Activated CD4-positive, alpha-beta memory T cell treated with anti-CD3 and anti-CD28 coated beads for 36 hours (primary cell): ENCODE measurements at regions of chr16 and their contacts with region 1.

Region 1: DNA sequence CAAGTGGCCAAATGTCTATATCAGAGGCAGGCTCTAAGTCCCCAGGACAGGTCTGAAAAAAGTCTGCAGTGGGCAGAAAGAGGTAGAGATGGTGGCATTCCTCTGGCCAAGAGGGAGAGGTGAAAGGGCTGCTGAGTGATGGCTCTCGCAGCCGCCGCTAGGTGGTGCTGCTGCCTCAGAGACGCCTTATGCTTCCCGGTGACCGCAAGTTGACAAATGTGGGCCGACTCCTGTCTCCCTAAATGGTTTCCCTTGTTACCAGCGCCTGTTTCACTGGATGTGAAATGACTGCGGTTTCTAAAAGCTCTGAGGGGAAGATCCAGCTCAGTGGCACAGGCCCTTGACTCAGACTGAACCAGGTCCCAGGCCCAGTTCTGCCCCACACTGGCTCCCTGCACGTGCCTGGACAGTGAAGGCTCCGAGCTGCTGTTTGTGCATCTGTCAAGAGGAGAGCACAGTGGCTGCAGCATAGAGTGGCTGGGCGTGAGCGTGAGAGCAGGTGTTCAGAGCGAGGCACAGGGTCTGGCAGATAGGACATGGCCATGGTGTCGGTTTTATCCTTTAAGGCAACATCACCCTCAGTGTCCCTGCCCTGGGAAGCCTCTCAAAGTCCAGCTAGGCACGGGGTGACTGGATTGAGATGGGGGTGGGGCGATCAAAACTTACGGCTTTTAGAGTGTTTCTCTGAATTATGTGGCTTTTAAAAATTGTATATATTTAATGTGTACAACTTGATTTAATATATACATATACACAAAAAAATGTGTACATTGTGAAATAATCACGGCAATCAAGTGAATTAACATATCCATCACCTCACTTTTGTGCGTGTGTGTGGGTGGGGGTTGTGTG is 19.9 kb downstream of the CLEC16A start:
- DNase-seq: peak; percentile 93
- H3K4me3 Mint-ChIP-seq: peak overlapping the region; percentile 60
- H3K27ac Mint-ChIP-seq: peak overlapping the region; percentile 98
- H3K4me1 Mint-ChIP-seq: peaks cover 77% of the 10 kb centered on the region
- H3K27me3 Mint-ChIP-seq: no peaks in the 10 kb centered on the region

Region 2: DNA sequence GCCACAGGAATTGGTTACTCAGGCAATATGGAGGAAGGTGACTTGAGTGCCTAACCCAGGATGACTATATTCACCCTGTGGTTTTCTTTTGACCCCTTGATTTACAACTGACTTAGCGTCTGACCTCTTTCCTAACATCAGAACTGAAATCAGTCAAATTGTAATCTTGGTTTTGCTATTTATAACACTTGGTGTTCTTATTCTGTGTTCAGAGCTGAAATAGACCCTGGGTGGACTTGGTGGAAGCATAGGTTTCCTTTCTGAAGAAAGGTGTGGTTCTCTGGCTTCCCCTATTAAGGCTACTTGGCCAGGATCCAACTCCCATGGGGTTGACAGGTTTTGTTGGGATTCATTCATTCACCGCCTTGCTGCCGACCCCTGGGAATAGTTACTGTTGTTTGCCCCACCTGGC is 60.9 kb after region 1 on chr16:
- CTCF ChIA-PET with region 1: interaction called, 5 read pairs
- POLR2A ChIA-PET with region 1: interaction called, 7 read pairs
- intact Hi-C with region 1: loop called (anchors 2 kb)
- DNase-seq: peak; percentile 24
- H3K4me3 Mint-ChIP-seq: no peak overlapping the region
- H3K27ac Mint-ChIP-seq: peak overlapping the region; percentile 91
- H3K4me1 Mint-ChIP-seq: peaks cover 22% of the 10 kb centered on the region
- H3K27me3 Mint-ChIP-seq: no peaks in the 10 kb centered on the region

Region 3: DNA sequence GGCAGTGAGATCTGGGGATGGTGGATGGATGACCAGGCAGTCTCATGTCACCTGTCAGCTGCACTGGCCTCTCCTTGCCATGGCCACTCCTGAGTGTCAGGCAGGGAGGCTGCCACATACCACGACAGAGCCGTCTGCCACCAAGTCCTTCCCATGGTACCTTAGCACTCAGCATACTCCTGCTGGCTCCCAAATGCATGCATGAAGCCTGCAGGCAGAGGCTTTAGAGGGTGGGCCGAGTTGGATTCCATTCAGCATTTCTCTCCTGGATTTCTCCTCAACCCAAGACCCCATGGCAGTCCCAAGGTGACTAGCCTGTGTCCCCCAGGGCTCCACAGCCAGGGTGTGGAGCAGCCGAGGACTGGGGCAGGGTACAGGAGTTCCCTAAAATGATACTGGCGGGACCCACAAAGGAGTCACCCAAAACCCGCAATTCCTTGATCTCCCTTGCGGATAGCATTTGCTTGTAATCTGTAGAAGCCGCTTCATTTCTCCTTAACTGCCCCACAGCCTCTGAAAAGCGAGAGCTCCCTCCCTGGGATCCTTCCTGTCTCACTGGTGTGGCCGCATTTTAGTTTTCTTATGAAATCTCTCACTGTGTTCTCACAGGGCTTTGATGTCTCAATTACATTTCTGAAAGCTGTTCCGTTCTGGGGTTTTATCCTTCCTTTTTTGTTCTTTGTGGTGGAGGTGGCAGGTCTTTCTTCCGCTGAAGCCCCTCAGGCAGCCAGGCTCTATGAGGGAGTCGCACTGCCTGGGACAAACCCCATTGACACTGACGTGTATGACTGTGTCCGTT is 150.3 kb after region 1 on chr16:
- CTCF ChIA-PET with region 1: interaction called, 14 read pairs
- POLR2A ChIA-PET with region 1: interaction called, 18 read pairs
- intact Hi-C with region 1: no loop called
- DNase-seq: peak; percentile 71
- H3K4me3 Mint-ChIP-seq: peak overlapping the region; percentile 60
- H3K27ac Mint-ChIP-seq: peak overlapping the region; percentile 88
- H3K4me1 Mint-ChIP-seq: peaks cover 73% of the 10 kb centered on the region
- H3K27me3 Mint-ChIP-seq: no peaks in the 10 kb centered on the region

Region 4: DNA sequence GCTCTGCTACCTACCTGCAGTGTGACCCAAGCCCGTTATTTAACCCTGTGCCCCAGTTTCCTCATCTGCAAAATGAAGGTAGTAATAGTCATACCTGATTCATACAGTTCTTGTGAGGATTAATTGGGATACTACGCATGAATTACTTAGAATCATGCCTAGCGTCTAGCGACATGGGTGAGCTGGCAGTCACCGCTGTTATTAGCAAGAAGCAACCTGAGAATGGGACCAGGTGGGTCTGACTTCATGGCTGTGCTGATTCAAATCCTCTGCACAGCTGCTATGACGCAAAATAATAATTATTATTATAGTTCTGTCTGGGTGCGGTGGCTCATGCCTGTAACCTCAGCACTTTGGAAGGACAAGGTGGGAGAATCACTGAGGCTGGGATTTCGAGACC is 283.9 kb after region 1 on chr16:
- CTCF ChIA-PET with region 1: interaction called, 118 read pairs
- POLR2A ChIA-PET with region 1: interaction called, 93 read pairs
- intact Hi-C with region 1: loop called (anchors 1 kb)
- DNase-seq: peak; percentile 65
- H3K4me3 Mint-ChIP-seq: no peak overlapping the region
- H3K27ac Mint-ChIP-seq: peak overlapping the region; percentile 93
- H3K4me1 Mint-ChIP-seq: peaks cover 64% of the 10 kb centered on the region
- H3K27me3 Mint-ChIP-seq: peaks cover 2% of the 10 kb centered on the region

Region 5: GRCh38 chr16:11370084-11370931 is 406.0 kb after region 1 on chr16:
- CTCF ChIA-PET with region 1: interaction called, 11 read pairs
- POLR2A ChIA-PET with region 1: no interaction called
- intact Hi-C with region 1: no loop called
- DNase-seq: peak; percentile 38
- H3K4me3 Mint-ChIP-seq: no peak overlapping the region
- H3K27ac Mint-ChIP-seq: no peak overlapping the region
- H3K4me1 Mint-ChIP-seq: peaks cover 11% of the 10 kb centered on the region
- H3K27me3 Mint-ChIP-seq: no peaks in the 10 kb centered on the region

Region 6: DNA sequence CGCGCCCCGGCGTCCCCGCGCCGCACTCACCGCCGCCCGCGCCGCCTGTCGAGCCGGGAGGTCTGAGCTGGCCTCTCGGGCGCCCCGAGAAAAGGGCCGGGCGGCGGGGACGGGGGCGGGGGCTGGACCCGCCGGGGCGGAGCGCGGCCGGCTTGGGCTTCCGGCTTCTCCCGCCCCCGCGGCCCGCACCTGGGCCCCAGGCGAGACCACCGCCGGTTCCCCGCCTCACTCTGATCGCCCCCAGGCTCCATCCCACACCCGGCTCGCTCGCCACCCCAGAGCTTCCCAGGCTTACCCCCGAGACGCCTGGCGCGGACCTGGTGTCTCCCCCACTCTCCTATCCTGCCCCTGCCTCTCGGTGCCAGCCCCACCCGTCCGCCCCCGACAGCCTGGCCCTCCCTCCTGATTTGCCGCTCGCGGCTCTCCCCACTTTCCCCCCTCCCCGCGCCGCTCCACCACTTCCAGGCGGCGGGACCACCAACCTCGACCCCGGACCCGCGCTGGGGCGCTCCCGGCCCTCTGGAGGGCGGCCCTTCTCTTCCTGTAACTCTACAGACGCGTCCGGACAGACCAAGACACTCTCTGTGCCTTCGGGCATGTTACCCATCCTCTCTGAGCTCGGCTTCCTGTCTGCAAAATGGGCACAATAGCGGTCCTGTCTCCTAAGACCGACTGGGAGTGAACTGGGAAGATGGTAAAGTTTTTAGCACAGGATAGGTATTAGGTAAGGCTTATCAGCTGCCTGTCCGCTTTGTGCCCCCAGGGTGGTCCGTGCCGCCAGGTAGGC is 622.8 kb after region 1 on chr16 and contains the start of gene LITAF:
- CTCF ChIA-PET with region 1: interaction called, 7 read pairs
- POLR2A ChIA-PET with region 1: interaction called, 4 read pairs
- intact Hi-C with region 1: loop called (anchors 5 kb)
- DNase-seq: peak; percentile 76
- H3K4me3 Mint-ChIP-seq: peak within 1 kb of the TSS; percentile 90
- H3K27ac Mint-ChIP-seq: peak within 1 kb of the TSS; percentile 91
- H3K4me1 Mint-ChIP-seq: peaks cover 30% of the 10 kb centered on the region
- H3K27me3 Mint-ChIP-seq: no peaks in the 10 kb centered on the region
- total RNA-seq, gene LITAF: 130 to 134 TPM